ENCODE measurements at regions of chr19 and their contacts with region 1.

Region 1: GRCh38 chr19:6424939-6425731 is 524 bp upstream of the KHSRP start:
- DNase-seq: peak; percentile 99
- H3K4me3 Mint-ChIP-seq: peak overlapping the region; percentile 79
- H3K27ac Mint-ChIP-seq: peak overlapping the region; percentile 90
- H3K4me1 Mint-ChIP-seq: peaks cover 28% of the 10 kb centered on the region
- H3K27me3 Mint-ChIP-seq: no peaks in the 10 kb centered on the region

Region 2: DNA sequence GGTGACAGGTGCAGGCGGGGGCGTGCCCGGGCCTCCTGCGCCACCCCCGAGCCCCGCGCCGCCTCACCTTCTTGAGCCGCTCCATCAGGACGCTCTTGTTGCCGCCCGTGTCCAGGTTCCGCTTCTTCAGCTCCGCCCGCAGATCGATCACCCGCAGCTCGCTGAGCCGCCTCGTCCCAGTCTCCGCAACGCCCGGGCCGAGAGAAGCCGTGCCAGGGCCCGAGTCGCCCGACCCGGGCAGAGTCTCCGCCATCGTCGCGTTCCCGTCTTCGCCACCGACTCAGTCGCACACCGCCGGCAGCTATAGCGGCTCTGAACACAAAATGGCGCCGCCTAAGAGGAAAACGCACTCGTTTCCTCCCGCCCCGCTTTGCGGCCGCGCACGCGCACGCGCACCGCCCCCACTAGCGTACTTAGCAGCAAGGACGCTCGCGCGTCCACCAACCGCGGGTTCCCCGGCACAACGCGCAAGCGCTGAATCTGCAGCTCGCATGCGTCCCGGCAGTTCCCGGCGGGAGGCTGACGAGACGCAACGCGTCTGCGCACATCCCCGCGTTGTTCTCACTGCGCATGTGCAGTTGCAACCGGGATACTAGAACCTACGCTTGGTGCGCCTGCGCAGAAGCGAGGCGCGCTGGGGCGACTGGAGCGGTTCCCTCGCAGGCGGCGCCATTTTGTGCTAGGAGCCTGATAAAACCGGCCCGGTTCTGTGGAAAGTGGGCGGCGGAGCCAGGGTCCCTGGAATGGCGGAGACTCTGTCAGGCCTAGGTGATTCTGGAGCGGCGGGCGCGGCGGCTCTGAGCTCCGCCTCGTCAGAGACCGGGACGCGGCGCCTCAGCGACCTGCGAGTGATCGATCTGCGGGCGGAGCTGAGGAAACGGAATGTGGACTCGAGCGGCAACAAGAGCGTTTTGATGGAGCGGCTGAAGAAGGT is 802.4 kb before region 1 on chr19 and contains the starts of genes SAFB and SAFB2:
- intact Hi-C with region 1: loop called (anchors 10 kb)
- DNase-seq: peak; percentile 100
- H3K4me3 Mint-ChIP-seq: peak within 1 kb of the TSS; percentile 100
- H3K27ac Mint-ChIP-seq: peak within 1 kb of the TSS; percentile 100
- H3K4me1 Mint-ChIP-seq: peaks cover 63% of the 10 kb centered on the region
- H3K27me3 Mint-ChIP-seq: peaks cover 3% of the 10 kb centered on the region
- total RNA-seq, gene SAFB: 143 and 146 TPM in 2 replicates
- total RNA-seq, gene SAFB2: 104 and 106 TPM in 2 replicates

Region 3: GRCh38 chr19:6279931-6280591 is 145.1 kb before region 1 on chr19 and contains the start of gene MLLT1:
- intact Hi-C with region 1: loop called (anchors 1 kb)
- DNase-seq: peak; percentile 96
- H3K4me3 Mint-ChIP-seq: peak within 1 kb of the TSS; percentile 95
- H3K27ac Mint-ChIP-seq: peak within 1 kb of the TSS; percentile 90
- H3K4me1 Mint-ChIP-seq: peaks cover 26% of the 10 kb centered on the region
- H3K27me3 Mint-ChIP-seq: no peaks in the 10 kb centered on the region
- total RNA-seq, gene MLLT1: 71.6 and 77.4 TPM in 2 replicates

Region 4: DNA sequence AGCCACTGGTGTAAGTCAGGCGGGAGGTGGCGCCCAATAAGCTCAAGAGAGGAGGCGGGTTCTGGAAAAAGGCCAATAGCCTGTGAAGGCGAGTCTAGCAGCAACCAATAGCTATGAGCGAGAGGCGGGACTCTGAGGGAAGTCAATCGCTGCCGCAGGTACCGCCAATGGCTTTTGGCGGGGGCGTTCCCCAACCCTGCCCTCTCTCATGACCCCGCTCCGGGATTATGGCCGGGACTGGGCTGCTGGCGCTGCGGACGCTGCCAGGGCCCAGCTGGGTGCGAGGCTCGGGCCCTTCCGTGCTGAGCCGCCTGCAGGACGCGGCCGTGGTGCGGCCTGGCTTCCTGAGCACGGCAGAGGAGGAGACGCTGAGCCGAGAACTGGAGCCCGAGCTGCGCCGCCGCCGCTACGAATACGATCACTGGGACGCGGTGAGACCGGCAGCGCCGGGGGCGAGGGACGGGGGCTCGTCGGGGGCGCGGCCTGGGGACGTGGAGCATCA is 52.5 kb before region 1 on chr19 and contains the start of gene ALKBH7:
- intact Hi-C with region 1: loop called (anchors 1 kb)
- DNase-seq: peak; percentile 95
- H3K4me3 Mint-ChIP-seq: peak within 1 kb of the TSS; percentile 81
- H3K27ac Mint-ChIP-seq: peak within 1 kb of the TSS; percentile 81
- H3K4me1 Mint-ChIP-seq: peaks cover 11% of the 10 kb centered on the region
- H3K27me3 Mint-ChIP-seq: no peaks in the 10 kb centered on the region
- total RNA-seq, gene ALKBH7: 24.8 and 27.1 TPM in 2 replicates

Region 5: GRCh38 chr19:6460101-6460853 is 35.1 kb after region 1 on chr19:
- intact Hi-C with region 1: loop called (anchors 1 kb)
- DNase-seq: peak; percentile 95
- H3K4me3 Mint-ChIP-seq: peak overlapping the region; percentile 89
- H3K27ac Mint-ChIP-seq: peak overlapping the region; percentile 84
- H3K4me1 Mint-ChIP-seq: peaks cover 21% of the 10 kb centered on the region
- H3K27me3 Mint-ChIP-seq: peaks cover 4% of the 10 kb centered on the region

Region 6: DNA sequence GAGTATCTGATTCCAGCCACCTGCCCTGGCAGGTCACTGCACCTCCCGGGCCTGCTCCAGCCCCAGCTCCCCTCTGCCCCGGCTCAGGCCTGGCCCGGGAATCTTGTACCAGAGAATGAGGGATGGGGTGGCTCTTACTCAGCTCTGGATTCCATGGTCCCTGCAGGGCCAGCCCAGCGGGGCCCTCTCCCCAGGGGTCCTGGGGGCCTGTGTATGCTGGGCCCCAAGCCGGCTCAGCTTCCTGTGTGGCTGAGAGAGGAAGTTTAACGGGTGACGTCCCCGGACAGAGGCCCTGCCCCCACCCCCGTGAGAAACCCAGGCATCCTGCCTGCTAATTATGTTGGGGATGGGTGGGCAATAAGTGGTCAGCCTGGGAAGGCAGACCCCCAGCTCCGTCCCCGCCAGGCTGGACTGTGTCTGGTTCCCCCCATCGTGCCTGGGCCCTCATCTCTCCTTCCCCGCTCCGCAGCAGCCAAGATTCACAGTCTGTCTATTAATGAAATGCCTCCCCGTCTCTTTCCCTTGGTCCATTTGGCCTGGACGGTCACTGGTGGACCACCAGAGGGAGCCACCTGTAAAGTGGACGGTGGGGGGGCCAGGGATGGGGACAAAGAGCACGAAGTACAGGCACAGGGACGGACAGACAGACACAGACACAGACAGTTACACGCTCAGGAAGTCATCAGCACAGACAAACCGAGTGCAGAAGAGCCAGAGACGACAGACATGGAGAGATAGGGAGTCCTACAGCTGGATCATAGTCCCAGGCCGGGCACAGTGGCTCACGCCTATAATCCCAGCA is 56.6 kb after region 1 on chr19 and contains the start of gene DENND1C:
- intact Hi-C with region 1: loop called (anchors 1 kb)
- DNase-seq: peak; percentile 61
- H3K4me3 Mint-ChIP-seq: peak within 1 kb of the TSS; percentile 91
- H3K27ac Mint-ChIP-seq: peak within 1 kb of the TSS; percentile 89
- H3K4me1 Mint-ChIP-seq: peaks cover 23% of the 10 kb centered on the region
- H3K27me3 Mint-ChIP-seq: no peaks in the 10 kb centered on the region
- total RNA-seq, gene DENND1C: 68.4 and 75.6 TPM in 2 replicates

Region 7: DNA sequence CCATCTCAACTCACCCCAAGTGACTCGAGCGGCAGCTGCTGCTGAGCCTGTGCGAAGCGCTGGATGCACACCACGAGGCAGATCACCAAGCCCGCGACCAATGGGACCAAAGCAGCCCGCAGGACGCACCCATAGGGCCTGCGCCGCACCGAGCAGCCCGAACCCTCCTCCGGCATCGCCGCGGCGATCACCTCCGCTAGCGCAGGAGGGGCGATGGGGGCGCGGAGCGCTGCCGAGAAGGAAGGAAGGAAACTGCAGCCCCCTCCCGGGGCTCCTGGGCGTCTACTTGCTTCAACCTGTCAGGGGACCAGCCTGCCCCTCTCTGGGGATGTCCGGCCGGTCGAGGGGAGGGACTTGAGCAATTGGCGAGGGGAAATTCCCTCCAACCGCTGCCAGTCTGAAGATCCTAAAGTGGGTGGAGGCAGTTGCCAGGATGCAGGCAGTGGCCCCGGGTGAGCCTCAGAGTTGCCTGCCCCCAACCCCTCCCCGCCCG is 165.7 kb after region 1 on chr19 and contains the start of gene CD70:
- intact Hi-C with region 1: no loop called
- DNase-seq: peak; percentile 70
- H3K4me3 Mint-ChIP-seq: peak within 1 kb of the TSS; percentile 95
- H3K27ac Mint-ChIP-seq: peak within 1 kb of the TSS; percentile 87
- H3K4me1 Mint-ChIP-seq: peaks cover 66% of the 10 kb centered on the region
- H3K27me3 Mint-ChIP-seq: peaks cover 33% of the 10 kb centered on the region
- total RNA-seq, gene CD70: 55.4 and 61.6 TPM in 2 replicates

Region 8: GRCh38 chr19:6705931-6706632 is 280.9 kb after region 1 on chr19:
- intact Hi-C with region 1: no loop called
- DNase-seq: no peak
- H3K4me3 Mint-ChIP-seq: no peak overlapping the region
- H3K27ac Mint-ChIP-seq: no peak overlapping the region
- H3K4me1 Mint-ChIP-seq: peaks cover 11% of the 10 kb centered on the region
- H3K27me3 Mint-ChIP-seq: peaks cover 29% of the 10 kb centered on the region

Region 9: DNA sequence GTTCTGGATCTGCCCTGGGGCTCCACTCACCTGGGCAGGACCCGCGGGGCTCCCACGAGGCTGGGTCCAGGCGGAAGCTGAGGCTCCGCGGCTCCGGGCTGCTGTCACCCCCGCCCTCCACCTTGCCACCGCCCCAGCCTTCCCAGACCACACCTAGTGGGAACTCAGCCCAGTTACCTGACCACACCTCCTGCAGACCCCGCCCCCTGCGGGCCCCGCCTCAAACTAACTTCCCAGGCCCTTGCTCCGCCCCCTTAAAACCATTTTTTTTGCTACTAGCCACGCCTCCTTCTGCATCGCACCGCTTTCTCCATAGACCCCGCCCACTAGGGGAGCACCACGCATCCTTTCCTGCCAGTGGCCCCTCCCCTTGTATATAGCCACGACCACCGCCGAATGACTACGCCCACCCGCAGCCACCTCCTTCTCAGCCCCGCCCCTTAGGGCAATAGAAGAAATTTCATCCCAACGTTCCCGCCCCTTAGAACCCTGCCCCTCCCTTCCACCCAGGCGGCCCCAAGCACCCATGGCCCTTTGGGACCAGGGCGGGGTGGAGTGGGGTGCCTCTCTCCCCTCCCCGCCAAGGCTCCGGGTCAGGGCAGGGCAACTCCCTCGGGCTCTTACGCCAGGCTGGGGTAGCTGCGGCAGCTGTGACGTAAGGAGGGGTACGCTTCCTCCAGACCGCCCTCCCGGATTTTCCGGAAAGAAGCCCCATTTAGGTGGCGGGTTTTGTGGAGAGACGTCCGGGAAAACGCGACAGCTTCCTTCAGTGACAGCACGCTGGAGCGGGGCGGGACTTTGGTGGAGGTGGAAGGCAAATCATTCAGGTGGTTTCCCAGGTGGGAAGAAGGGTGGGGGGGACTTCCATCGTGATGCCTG is 342.5 kb after region 1 on chr19 and contains the start of gene SH2D3A:
- intact Hi-C with region 1: loop called (anchors 1 kb)
- DNase-seq: peak; percentile 93
- H3K4me3 Mint-ChIP-seq: peak within 1 kb of the TSS; percentile 88
- H3K27ac Mint-ChIP-seq: peak within 1 kb of the TSS; percentile 89
- H3K4me1 Mint-ChIP-seq: peaks cover 53% of the 10 kb centered on the region
- H3K27me3 Mint-ChIP-seq: no peaks in the 10 kb centered on the region
- total RNA-seq, gene SH2D3A: 15.0 and 15.6 TPM in 2 replicates

Measured in activated T-helper 1 cell treated with anti-CD3 and anti-CD28 coated beads, Interleukin-12 subunit alpha, Interleukin-12 subunit beta, Interleukin-2, Interleukin-4 antibody, amounts not matched to agents 30 ng/mL and 10 ng/mL and 1 ng/mL, durations not matched to agents 14 hours and 24 hours and 36 hours (primary cell).